KBM-7 (cell line): ENCODE measurements at regions of chr7 and their contacts with region 1.

Region 1: DNA sequence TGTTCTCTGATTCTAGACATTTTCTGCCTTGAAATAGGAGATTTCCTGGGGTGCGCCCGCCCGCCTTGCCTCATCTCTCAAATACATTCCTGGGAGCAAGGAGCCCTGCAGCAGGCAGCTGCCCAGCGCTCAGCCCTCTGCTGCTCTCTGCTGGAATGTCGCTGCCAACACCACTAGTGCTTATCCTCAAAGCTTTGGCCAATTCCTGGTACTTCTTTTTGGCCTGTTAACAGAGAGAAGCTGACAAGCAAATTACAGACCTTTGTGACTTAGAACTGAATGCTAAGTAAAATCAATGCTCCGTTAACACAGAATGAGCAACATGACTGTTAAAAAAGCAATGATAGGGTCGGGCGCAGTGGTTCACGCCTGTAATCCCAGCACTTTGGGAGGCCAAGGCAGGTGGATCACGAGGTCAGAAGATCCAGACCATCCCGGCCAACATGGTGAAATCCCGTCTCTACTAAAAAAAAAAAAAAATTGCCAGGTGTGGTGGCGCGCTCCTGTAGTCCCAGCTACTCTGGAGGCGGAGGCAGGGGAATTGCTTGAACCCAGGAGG is 41.9 kb upstream of the SYPL1 start:
- DNase-seq: peak; percentile 86

Region 2: GRCh38 chr7:106056513-106057203 is 97.3 kb before region 1 on chr7:
- in situ Hi-C with region 1: loop called (anchors 10 kb)
- DNase-seq: peak; percentile 84

Region 3: GRCh38 chr7:106068994-106069393 is 85.0 kb before region 1 on chr7:
- in situ Hi-C with region 1: no loop called
- DNase-seq: no peak